ENCODE measurements at regions of chr1 and their contacts with region 1.

Region 1: GRCh38 chr1:86466986-86467385 is 1.7 kb upstream of the CLCA1 start:
- DNase-seq: no peak
- H3K4me3 ChIP-seq: no peak overlapping the region
- H3K27ac ChIP-seq: no peak overlapping the region
- H3K4me1 ChIP-seq: no peaks in the 10 kb centered on the region
- H3K27me3 ChIP-seq: no peaks in the 10 kb centered on the region
- CTCF ChIP-seq: no peak
- POLR2A ChIP-seq: no peak

Region 2: GRCh38 chr1:84996846-84997666 is 1469.9 kb before region 1 on chr1 and contains the start of gene MCOLN2:
- intact Hi-C with region 1: loop called (anchors 5 kb)
- DNase-seq: no peak
- H3K4me3 ChIP-seq: peak within 1 kb of the TSS; percentile 53 to 74 (median 61)
- H3K27ac ChIP-seq: no peak within 1 kb of the TSS
- H3K4me1 ChIP-seq: peaks cover 3 to 7% of the 10 kb centered on the region in 2 donors
- H3K27me3 ChIP-seq: peaks cover 2 to 13% of the 10 kb centered on the region in 2 donors
- CTCF ChIP-seq: no peak
- POLR2A ChIP-seq: no peak
- total RNA-seq, gene MCOLN2: 0.33 to 3.8 (median 1.6) TPM

Region 3: GRCh38 chr1:86395771-86396497 is 71.1 kb before region 1 on chr1 and contains the start of gene ODF2L:
- intact Hi-C with region 1: loop called (anchors 2 kb)
- DNase-seq: peak; percentile 91
- H3K4me3 ChIP-seq: peak within 1 kb of the TSS; percentile 76 to 95 (median 90)
- H3K27ac ChIP-seq: peak within 1 kb of the TSS; percentile 92 to 95
- H3K4me1 ChIP-seq: peaks cover 0 to 4% of the 10 kb centered on the region in 2 donors
- H3K27me3 ChIP-seq: no peaks in the 10 kb centered on the region
- CTCF ChIP-seq: no peak
- POLR2A ChIP-seq: peak; percentile 62
- total RNA-seq, gene ODF2L: 39.8 to 122 (median 72.8) TPM

Region 4: GRCh38 chr1:86441581-86441980 is 25.4 kb before region 1 on chr1:
- intact Hi-C with region 1: loop called (anchors 1 kb)
- DNase-seq: no peak
- H3K4me3 ChIP-seq: no peak overlapping the region
- H3K27ac ChIP-seq: no peak overlapping the region
- H3K4me1 ChIP-seq: no peaks in the 10 kb centered on the region
- H3K27me3 ChIP-seq: no peaks in the 10 kb centered on the region
- CTCF ChIP-seq: no peak
- POLR2A ChIP-seq: no peak

Region 5: GRCh38 chr1:86542626-86543025 is 75.6 kb after region 1 on chr1:
- intact Hi-C with region 1: no loop called
- DNase-seq: no peak
- H3K4me3 ChIP-seq: no peak overlapping the region
- H3K27ac ChIP-seq: peak overlapping the region; percentile 19 to 27
- H3K4me1 ChIP-seq: no peaks in the 10 kb centered on the region
- H3K27me3 ChIP-seq: no peaks in the 10 kb centered on the region
- CTCF ChIP-seq: no peak
- POLR2A ChIP-seq: no peak